ENCODE measurements at regions of chr3 and their contacts with region 1.

Region 1: GRCh38 chr3:58013973-58014649 is 5.9 kb downstream of the FLNB start:
- DNase-seq: peak; percentile 88
- H3K4me3 ChIP-seq: no peak overlapping the region
- H3K27me3 ChIP-seq: no peaks in the 10 kb centered on the region
- CTCF ChIP-seq: no peak

Region 2: GRCh38 chr3:57928511-57928910 is 85.6 kb before region 1 on chr3:
- CTCF ChIA-PET with region 1: no interaction called
- POLR2A ChIA-PET with region 1: interaction called, 17 read pairs
- DNase-seq: no peak
- H3K4me3 ChIP-seq: no peak overlapping the region
- H3K27me3 ChIP-seq: no peaks in the 10 kb centered on the region
- CTCF ChIP-seq: no peak

Measured in BJ (cell line).